Lower lobe of right lung (tissue), 2 donors: ENCODE measurements at regions of chr4 and their contacts with region 1.

Region 1: DNA sequence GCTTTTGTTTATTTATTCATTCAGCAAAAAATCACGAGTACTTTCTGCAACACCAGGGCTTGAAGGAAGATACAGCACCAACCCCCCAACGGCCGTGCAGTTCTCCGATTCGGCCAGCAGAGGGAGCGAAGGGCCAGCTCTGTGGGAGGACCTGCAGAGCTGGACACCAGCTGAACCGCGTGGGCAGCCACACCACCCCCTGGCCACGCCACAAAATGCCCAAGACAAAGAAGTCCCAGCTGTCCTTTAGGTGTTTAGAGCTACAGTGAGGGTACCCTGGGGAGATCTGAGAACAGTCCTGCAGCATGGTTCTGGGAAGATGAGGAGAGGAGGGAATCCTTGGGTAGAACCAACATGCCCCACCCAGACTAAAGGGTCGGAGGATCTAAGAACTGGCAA is 83.1 kb downstream of the RELL1 start:
- DNase-seq: peak; percentile 88
- ATAC-seq: peak; percentile 95
- H3K4me3 ChIP-seq: no peak overlapping the region
- H3K27ac ChIP-seq: no peak overlapping the region
- H3K4me1 ChIP-seq: peaks cover 5% of the 10 kb centered on the region
- H3K27me3 ChIP-seq: no peaks in the 10 kb centered on the region
- CTCF ChIP-seq: peak; percentile 98

Region 2: GRCh38 chr4:37475117-37475516 is 128.0 kb before region 1 on chr4:
- intact Hi-C with region 1: no loop called
- DNase-seq: no peak
- ATAC-seq: peak in 1 of 2 donors; percentile 22
- H3K4me3 ChIP-seq: no peak overlapping the region
- H3K27ac ChIP-seq: no peak overlapping the region
- H3K4me1 ChIP-seq: no peaks in the 10 kb centered on the region
- H3K27me3 ChIP-seq: no peaks in the 10 kb centered on the region
- CTCF ChIP-seq: no peak

Region 3: DNA sequence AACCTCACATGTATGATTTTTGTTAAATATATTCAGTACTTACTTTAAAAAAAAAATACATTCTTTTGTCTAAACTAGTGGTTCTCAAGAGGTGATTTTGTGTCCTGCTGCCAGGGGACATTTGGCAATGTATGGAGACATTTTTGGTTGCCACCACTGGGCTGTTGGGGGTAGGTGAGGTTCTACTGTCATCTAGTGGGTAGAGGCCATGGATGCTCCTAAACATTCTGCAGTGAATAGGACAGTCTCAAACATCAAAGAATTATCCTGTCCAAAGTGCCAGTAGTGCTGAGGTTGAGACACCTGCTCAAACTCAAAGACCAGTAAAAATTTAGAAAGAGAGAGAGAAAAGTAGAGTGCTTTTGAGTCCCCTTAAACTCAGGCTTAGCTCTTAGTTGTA is 190.5 kb after region 1 on chr4:
- intact Hi-C with region 1: loop called (anchors 5 kb)
- DNase-seq: no peak
- ATAC-seq: peak; percentile 70 to 82
- H3K4me3 ChIP-seq: no peak overlapping the region
- H3K27ac ChIP-seq: no peak overlapping the region
- H3K4me1 ChIP-seq: no peaks in the 10 kb centered on the region
- H3K27me3 ChIP-seq: no peaks in the 10 kb centered on the region
- CTCF ChIP-seq: peak; percentile 50